ENCODE measurements at regions of chr19 and their contacts with region 1.

Region 1: GRCh38 chr19:36009220-36009619 is 607 bp upstream of the SYNE4 start:
- DNase-seq: peak; percentile 66 to 83 (median 72)
- H3K4me3 ChIP-seq: peak overlapping the region; percentile 29
- H3K27ac ChIP-seq: peak overlapping the region; percentile 27 to 50
- H3K4me1 ChIP-seq: peaks cover 4% of the 10 kb centered on the region
- H3K27me3 ChIP-seq: no peaks in the 10 kb centered on the region
- CTCF ChIP-seq: peak in 1 of 3 donors; percentile 13
- EP300 ChIP-seq: no peak
- POLR2A ChIP-seq: no peak

Region 2: GRCh38 chr19:35949131-35949530 is 60.1 kb before region 1 on chr19:
- intact Hi-C with region 1: no loop called
- DNase-seq: no peak
- H3K4me3 ChIP-seq: no peak overlapping the region
- H3K27ac ChIP-seq: no peak overlapping the region
- H3K4me1 ChIP-seq: no peaks in the 10 kb centered on the region
- H3K27me3 ChIP-seq: no peaks in the 10 kb centered on the region
- CTCF ChIP-seq: no peak
- EP300 ChIP-seq: no peak
- POLR2A ChIP-seq: no peak

Region 3: GRCh38 chr19:36054119-36054732 is 45.0 kb after region 1 on chr19 and contains the start of gene THAP8:
- intact Hi-C with region 1: loop called in 1 of 4 experiments (anchors 10 kb)
- DNase-seq: peak; percentile 100
- H3K4me3 ChIP-seq: peak within 1 kb of the TSS; percentile 67
- H3K27ac ChIP-seq: peak within 1 kb of the TSS; percentile 38 to 94
- H3K4me1 ChIP-seq: peaks cover 1% of the 10 kb centered on the region
- H3K27me3 ChIP-seq: no peaks in the 10 kb centered on the region
- CTCF ChIP-seq: peak; percentile 19 to 85 (median 71)
- EP300 ChIP-seq: peak; percentile 83
- POLR2A ChIP-seq: peak; percentile 52
- total RNA-seq, gene THAP8: 5.3 to 7.9 (median 6.5) TPM

Measured in ovary (tissue), 10 donors.